Endothelial cell of umbilical vein (primary cell): ENCODE measurements at regions of chr18 and their contacts with region 1.

Region 1: DNA sequence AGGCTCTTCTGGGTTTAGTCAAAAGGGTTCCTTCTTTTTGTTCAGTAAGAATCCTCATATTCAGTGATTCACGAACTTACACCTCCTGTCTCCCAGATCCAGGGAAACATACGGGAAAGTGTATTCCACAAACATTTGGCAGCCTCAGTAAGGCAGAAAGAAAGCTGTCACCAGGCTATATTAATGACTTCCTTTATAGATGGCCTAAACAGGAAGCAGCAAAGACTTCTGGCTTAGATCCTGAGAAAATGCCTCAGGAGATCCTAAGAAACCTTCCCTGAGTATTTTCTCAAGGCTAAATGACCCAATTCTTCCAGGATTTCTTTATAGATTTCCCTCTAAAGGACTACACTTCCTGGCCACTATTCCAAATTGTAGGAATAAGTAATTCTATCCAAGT is 1995.5 kb upstream of the CELF4 start:
- DNase-seq: peak; percentile 93
- H3K4me3 ChIP-seq: no peak overlapping the region
- H3K27ac ChIP-seq: no peak overlapping the region
- H3K4me1 ChIP-seq: peaks cover 11% of the 10 kb centered on the region
- H3K27me3 ChIP-seq: no peaks in the 10 kb centered on the region
- CTCF ChIP-seq: no peak
- POLR2A ChIP-seq: peak; percentile 17

Region 2: GRCh38 chr18:39057423-39058057 is 503.6 kb before region 1 on chr18:
- CTCF ChIA-PET with region 1: no interaction called
- POLR2A ChIA-PET with region 1: interaction called, 3 read pairs
- dilution Hi-C with region 1: no loop called
- intact Hi-C with region 1: loop called (anchors 10 kb)
- DNase-seq: peak; percentile 81
- H3K4me3 ChIP-seq: no peak overlapping the region
- H3K27ac ChIP-seq: peak overlapping the region; percentile 88
- H3K4me1 ChIP-seq: peaks cover 27% of the 10 kb centered on the region
- H3K27me3 ChIP-seq: peaks cover 3 to 7% of the 10 kb centered on the region in 2 experiments
- CTCF ChIP-seq: no peak
- POLR2A ChIP-seq: no peak

Region 3: DNA sequence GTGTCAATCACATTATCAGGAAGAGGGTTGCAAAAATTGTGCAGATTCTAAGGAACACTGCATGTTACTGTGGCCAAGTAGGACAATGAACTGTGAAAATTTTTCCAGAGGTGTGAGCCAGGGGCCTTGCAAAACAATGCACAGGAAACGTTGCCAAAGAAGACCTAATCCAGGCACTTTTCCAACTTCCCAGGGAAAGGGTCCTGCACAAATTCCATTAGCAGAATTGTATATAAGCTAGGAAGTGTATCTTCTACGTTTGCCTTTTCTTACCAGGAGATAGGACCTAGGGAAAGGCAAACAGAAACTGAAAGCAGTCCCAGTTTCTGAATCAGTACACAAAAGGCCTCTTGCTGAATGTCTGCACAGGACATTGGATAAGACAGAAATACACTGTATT is 107.2 kb before region 1 on chr18:
- CTCF ChIA-PET with region 1: no interaction called
- POLR2A ChIA-PET with region 1: no interaction called
- dilution Hi-C with region 1: no loop called
- intact Hi-C with region 1: loop called (anchors 1 kb)
- DNase-seq: peak; percentile 99
- H3K4me3 ChIP-seq: peak overlapping the region in 1 of 3 experiments; percentile 55
- H3K27ac ChIP-seq: peak overlapping the region; percentile 89
- H3K4me1 ChIP-seq: peaks cover 46% of the 10 kb centered on the region
- H3K27me3 ChIP-seq: no peaks in the 10 kb centered on the region
- CTCF ChIP-seq: no peak
- POLR2A ChIP-seq: no peak

Region 4: GRCh38 chr18:39660141-39660540 is 99.0 kb after region 1 on chr18:
- CTCF ChIA-PET with region 1: no interaction called
- POLR2A ChIA-PET with region 1: no interaction called
- dilution Hi-C with region 1: no loop called
- intact Hi-C with region 1: no loop called
- DNase-seq: no peak
- H3K4me3 ChIP-seq: no peak overlapping the region
- H3K27ac ChIP-seq: no peak overlapping the region
- H3K4me1 ChIP-seq: no peaks in the 10 kb centered on the region
- H3K27me3 ChIP-seq: no peaks in the 10 kb centered on the region
- CTCF ChIP-seq: no peak
- POLR2A ChIP-seq: no peak

Region 5: DNA sequence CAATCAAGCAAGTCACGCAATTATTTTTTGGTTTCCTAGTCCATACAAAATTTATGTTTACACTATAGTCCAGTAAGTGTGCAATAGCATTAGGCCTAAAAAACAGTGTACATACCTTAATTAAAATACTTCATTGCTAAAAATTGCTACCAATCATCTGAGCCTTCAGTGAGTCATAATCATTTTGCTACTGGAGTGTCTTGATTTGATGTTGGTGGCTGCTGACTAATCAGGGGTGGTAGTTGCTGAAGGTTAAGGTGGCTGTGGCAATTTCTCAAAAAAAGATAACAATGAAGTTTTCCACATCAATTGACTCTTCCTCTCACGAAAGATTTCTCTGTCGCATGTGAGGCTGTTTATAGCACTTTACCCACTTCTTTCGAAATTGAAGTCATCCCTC is 390.2 kb after region 1 on chr18:
- CTCF ChIA-PET with region 1: no interaction called
- POLR2A ChIA-PET with region 1: no interaction called
- dilution Hi-C with region 1: no loop called
- intact Hi-C with region 1: no loop called
- DNase-seq: no peak
- H3K4me3 ChIP-seq: no peak overlapping the region
- H3K27ac ChIP-seq: no peak overlapping the region
- H3K4me1 ChIP-seq: peaks cover 11% of the 10 kb centered on the region
- H3K27me3 ChIP-seq: no peaks in the 10 kb centered on the region
- CTCF ChIP-seq: no peak
- POLR2A ChIP-seq: no peak

Region 6: GRCh38 chr18:40365526-40365925 is 804.4 kb after region 1 on chr18:
- CTCF ChIA-PET with region 1: no interaction called
- POLR2A ChIA-PET with region 1: no interaction called
- dilution Hi-C with region 1: no loop called
- intact Hi-C with region 1: loop called (anchors 2 kb)
- DNase-seq: no peak
- H3K4me3 ChIP-seq: no peak overlapping the region
- H3K27ac ChIP-seq: peak overlapping the region; percentile 52
- H3K4me1 ChIP-seq: peaks cover 36% of the 10 kb centered on the region
- H3K27me3 ChIP-seq: no peaks in the 10 kb centered on the region
- CTCF ChIP-seq: no peak
- POLR2A ChIP-seq: no peak